Activated CD8-positive, alpha-beta T cell treated with anti-CD3 and anti-CD28 coated beads, Interleukin-2, amount 10 ng/mL, durations not matched to agents 7 days and 5 days (primary cell): ENCODE measurements at regions of chr7 and their contacts with region 1.

Region 1: DNA sequence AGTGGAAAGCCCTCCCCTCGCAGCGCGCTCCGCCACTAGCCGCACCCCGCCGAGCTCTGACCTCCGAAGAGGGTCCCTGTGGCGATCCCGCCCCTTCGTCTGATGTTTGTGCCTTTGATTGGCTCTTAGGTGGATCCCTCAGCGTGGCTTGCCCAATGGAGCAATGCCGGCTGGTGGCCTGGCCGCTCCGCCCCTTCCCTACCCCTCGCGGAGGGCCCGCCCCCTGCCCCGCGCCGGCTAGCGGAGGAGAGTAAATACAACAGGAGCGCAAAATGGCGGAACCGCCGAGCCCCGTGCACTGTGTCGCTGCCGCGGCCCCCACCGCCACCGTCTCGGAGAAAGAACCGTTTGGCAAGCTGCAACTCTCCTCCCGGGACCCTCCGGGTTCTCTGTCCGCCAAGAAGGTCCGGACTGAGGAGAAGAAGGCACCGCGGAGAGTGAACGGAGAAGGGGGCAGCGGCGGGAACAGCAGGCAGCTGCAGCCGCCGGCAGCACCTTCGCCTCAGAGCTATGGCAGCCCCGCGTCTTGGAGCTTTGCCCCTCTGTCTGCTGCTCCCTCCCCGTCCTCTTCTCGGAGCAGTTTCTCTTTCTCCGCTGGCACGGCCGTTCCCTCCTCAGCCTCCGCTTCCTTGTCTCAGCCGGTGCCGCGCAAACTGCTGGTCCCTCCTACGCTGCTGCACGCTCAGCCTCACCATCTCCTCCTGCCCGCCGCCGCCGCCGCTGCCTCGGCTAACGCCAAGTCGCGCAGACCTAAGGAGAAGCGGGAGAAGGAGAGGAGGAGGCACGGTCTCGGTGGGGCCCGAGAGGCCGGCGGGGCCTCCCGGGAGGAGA is at the start of gene RSBN1L:
- DNase-seq: peak; percentile 99
- ATAC-seq: peak; percentile 98
- H3K4me3 Mint-ChIP-seq: peak within 1 kb of the TSS; percentile 98
- H3K27ac Mint-ChIP-seq: peak within 1 kb of the TSS; percentile 96
- H3K4me1 Mint-ChIP-seq: peaks cover 45% of the 10 kb centered on the region
- H3K27me3 Mint-ChIP-seq: no peaks in the 10 kb centered on the region
- total RNA-seq, gene RSBN1L: 24.5 to 27.4 TPM

Region 2: DNA sequence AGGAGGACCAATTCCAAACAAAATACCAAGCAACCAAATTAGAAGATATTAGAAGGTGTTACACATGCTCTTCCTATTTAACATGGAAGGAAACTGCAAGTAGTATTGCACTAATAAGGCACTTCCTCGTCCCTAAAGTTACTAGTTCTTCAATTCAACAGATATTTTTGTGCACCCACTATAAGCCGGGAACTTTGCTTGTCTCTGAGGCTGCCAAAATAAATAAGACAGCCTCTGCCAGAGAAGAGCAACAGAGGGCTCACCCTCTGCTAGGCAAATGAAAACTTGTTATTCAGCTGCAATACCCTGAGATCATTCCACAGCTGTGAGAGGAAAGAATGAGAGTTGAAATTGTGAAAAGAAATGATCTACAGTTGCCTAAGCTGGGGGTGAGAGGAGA is 242.9 kb before region 1 on chr7:
- CTCF ChIA-PET with region 1: no interaction called
- POLR2A ChIA-PET with region 1: no interaction called
- DNase-seq: no peak
- ATAC-seq: no peak
- H3K4me3 Mint-ChIP-seq: no peak overlapping the region
- H3K27ac Mint-ChIP-seq: no peak overlapping the region
- H3K4me1 Mint-ChIP-seq: no peaks in the 10 kb centered on the region
- H3K27me3 Mint-ChIP-seq: peaks cover 3% of the 10 kb centered on the region

Region 3: GRCh38 chr7:77665161-77665560 is 31.3 kb before region 1 on chr7:
- CTCF ChIA-PET with region 1: no interaction called
- POLR2A ChIA-PET with region 1: no interaction called
- DNase-seq: no peak
- ATAC-seq: no peak
- H3K4me3 Mint-ChIP-seq: no peak overlapping the region
- H3K27ac Mint-ChIP-seq: no peak overlapping the region
- H3K4me1 Mint-ChIP-seq: no peaks in the 10 kb centered on the region
- H3K27me3 Mint-ChIP-seq: no peaks in the 10 kb centered on the region

Region 4: GRCh38 chr7:77736991-77737390 is 40.6 kb after region 1 on chr7:
- CTCF ChIA-PET with region 1: no interaction called
- POLR2A ChIA-PET with region 1: no interaction called
- DNase-seq: no peak
- ATAC-seq: no peak
- H3K4me3 Mint-ChIP-seq: no peak overlapping the region
- H3K27ac Mint-ChIP-seq: no peak overlapping the region
- H3K4me1 Mint-ChIP-seq: peaks cover 4% of the 10 kb centered on the region
- H3K27me3 Mint-ChIP-seq: no peaks in the 10 kb centered on the region

Region 5: DNA sequence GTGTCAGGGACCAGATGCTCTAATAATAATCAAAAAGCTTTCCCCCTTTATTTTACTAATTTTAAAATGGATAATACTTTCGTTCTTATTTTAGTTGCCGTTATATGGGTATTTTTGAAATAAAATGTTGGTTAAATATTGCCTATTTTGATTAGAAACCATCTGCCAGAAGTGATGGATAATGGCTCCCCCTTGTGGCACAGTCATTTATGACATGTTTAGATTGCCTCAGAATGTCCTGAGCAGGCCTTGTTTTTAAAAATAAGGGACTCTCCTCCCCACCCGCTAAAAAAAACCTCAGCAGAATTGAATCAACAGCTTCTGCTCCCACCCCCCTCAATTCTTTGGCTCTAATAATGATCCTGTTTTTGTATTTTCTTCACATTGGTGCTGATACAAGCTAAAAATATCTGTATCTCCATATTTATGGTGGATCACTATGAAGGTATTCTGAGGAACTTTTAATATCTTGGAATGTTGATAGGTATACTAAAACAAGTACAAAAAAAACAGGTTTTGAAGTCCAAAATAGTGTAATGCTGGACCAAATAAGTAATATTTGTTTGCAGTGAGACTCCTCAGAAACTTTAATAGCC is 63.0 kb after region 1 on chr7:
- CTCF ChIA-PET with region 1: interaction called, 16 read pairs
- POLR2A ChIA-PET with region 1: interaction called, 9 read pairs
- DNase-seq: peak; percentile 81
- ATAC-seq: peak; percentile 76
- H3K4me3 Mint-ChIP-seq: no peak overlapping the region
- H3K27ac Mint-ChIP-seq: no peak overlapping the region
- H3K4me1 Mint-ChIP-seq: peaks cover 15% of the 10 kb centered on the region
- H3K27me3 Mint-ChIP-seq: no peaks in the 10 kb centered on the region